Activated B cell treated with CpG ODN at 0.5 μM for 24 hours (primary cell): ENCODE measurements at regions of chrX and their contacts with region 1.

Region 1: DNA sequence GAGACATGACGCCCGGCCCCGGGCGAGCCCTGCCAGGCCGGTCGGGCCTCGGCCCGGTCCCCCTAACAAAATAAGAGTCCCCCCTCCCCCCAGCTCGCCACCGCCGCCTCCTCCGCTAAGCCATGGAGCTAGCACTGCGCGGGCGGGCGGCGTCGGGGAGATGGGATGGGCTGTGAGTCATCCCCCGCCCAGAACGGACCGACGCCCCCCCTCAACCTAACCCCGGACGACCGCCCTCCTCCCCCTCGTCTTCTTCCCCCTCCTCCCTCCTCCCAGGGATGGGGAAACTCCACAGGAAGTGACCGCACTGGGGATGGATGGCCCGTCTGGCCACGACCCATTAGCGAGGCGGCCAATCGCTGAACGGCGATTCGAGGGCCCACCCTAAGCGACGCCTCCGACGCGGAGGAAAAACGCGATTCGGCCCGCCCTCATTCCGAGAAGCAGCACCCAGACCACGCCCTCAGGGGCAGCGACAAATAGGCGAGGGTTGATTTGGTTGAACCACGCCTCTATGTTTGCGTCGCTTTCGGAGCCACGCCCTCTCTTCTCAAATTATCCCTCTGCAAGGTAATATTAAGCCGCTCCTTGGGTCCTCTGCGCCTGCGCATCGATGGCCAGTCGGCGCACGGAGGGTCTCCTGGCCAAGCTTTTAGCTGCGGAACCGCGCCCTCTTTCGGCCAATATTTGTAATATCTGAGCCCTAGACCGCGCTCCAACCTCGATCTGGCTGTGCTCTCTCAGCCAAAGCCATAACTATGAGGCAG is at the start of gene TFE3:
- DNase-seq: peak; percentile 82
- ATAC-seq: peak; percentile 86
- H3K4me3 Mint-ChIP-seq: peak within 1 kb of the TSS; percentile 89
- H3K27ac Mint-ChIP-seq: peak within 1 kb of the TSS; percentile 85
- H3K4me1 Mint-ChIP-seq: peaks cover 33% of the 10 kb centered on the region
- H3K27me3 Mint-ChIP-seq: no peaks in the 10 kb centered on the region
- CTCF ChIP-seq: no peak
- total RNA-seq, gene TFE3: 31.1 and 33.3 TPM in 2 replicates

Region 2: GRCh38 chrX:48676106-48676892 is 367.1 kb before region 1 on chrX:
- CTCF ChIA-PET with region 1: no interaction called
- POLR2A ChIA-PET with region 1: no interaction called
- intact Hi-C with region 1: loop called (anchors 10 kb)
- DNase-seq: peak; percentile 79
- ATAC-seq: peak; percentile 94
- H3K4me3 Mint-ChIP-seq: peak overlapping the region; percentile 89
- H3K27ac Mint-ChIP-seq: peak overlapping the region; percentile 88
- H3K4me1 Mint-ChIP-seq: peaks cover 22% of the 10 kb centered on the region
- H3K27me3 Mint-ChIP-seq: no peaks in the 10 kb centered on the region
- CTCF ChIP-seq: no peak

Region 3: DNA sequence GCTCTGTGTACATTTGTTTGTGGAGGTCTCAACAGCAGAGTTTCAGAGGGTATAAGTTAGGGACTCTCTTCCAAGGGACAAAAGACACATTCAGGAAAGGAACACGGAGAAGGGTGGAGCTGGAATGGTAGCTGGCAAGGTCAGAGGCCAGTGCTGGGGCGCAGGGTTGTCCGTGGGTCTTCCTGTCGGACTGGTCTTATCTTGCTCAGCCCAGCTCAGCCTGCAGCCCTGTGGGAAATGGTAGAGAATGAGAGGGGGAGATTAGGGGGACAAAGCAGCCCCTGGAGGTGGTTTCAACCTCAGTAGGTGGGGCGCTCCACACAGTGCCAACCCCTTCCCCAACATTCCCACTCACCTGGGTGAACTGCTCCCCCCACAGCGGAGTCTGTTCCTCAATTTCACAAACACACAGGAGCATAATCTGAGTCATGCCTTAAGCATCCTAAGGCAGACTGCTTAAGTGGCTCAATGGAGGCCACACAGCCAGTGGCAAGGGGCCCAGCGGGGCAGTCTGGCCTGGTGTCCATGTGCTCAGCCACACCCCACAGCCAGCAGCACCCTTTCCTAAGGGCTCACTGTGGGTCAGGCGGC is 248.4 kb before region 1 on chrX:
- CTCF ChIA-PET with region 1: no interaction called
- POLR2A ChIA-PET with region 1: no interaction called
- intact Hi-C with region 1: no loop called
- DNase-seq: no peak
- ATAC-seq: no peak
- H3K4me3 Mint-ChIP-seq: no peak overlapping the region
- H3K27ac Mint-ChIP-seq: no peak overlapping the region
- H3K4me1 Mint-ChIP-seq: no peaks in the 10 kb centered on the region
- H3K27me3 Mint-ChIP-seq: no peaks in the 10 kb centered on the region
- CTCF ChIP-seq: no peak

Region 4: DNA sequence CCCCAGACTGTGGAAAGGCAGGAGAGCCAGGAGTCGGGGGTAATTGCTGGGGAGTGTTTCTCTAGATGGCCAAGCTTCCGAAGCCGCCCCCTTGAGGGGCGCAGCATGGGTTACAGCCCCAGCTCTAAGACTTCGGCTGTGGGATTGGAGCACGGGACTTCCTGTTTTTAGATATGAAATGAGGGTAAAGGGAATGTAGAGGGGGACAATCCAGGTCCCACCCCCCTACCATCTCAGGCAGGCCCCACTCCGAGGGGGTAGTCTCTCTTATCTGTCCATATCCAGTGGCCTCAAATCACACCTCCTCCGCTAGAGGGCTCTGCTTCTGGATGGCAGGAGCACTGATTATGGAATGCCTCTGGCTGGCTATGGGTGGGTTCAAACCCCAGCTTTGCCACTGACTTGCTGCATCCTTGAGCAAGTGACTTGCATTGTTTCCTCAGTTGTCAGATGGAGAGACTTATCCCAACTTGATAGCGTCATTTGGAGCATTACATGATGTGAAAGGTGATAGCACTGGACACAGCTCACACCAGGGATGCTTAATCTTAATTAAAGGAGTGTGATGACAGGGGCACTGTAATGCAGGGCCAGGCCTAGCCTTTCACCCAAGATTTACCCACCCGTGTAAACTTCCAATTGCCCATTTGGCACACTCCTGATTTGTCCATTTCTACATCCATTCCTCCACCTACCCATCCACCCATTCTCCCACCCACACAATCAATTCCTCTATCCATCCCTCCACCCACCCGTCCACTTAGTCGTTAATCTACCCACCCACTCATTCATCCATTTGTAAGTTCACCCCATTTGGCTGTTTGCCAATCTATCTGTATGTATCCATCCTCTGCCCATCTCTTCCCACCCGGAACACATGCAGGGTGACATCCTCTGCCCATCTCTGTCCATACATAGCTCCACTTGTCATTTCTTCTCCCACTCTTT is 70.9 kb before region 1 on chrX:
- CTCF ChIA-PET with region 1: interaction called, 3 read pairs
- POLR2A ChIA-PET with region 1: interaction called, 3 read pairs
- intact Hi-C with region 1: loop called (anchors 1 kb)
- DNase-seq: no peak
- ATAC-seq: peak; percentile 67
- H3K4me3 Mint-ChIP-seq: peak overlapping the region; percentile 57
- H3K27ac Mint-ChIP-seq: no peak overlapping the region
- H3K4me1 Mint-ChIP-seq: peaks cover 13% of the 10 kb centered on the region
- H3K27me3 Mint-ChIP-seq: no peaks in the 10 kb centered on the region
- CTCF ChIP-seq: no peak

Region 5: GRCh38 chrX:49053223-49054072 is 10.0 kb after region 1 on chrX:
- CTCF ChIA-PET with region 1: no interaction called
- POLR2A ChIA-PET with region 1: interaction called, 5 read pairs
- intact Hi-C with region 1: loop called (anchors 1 kb)
- DNase-seq: peak; percentile 35
- ATAC-seq: peak; percentile 79
- H3K4me3 Mint-ChIP-seq: peak overlapping the region; percentile 81
- H3K27ac Mint-ChIP-seq: peak overlapping the region; percentile 85
- H3K4me1 Mint-ChIP-seq: peaks cover 25% of the 10 kb centered on the region
- H3K27me3 Mint-ChIP-seq: no peaks in the 10 kb centered on the region
- CTCF ChIP-seq: no peak

Region 6: DNA sequence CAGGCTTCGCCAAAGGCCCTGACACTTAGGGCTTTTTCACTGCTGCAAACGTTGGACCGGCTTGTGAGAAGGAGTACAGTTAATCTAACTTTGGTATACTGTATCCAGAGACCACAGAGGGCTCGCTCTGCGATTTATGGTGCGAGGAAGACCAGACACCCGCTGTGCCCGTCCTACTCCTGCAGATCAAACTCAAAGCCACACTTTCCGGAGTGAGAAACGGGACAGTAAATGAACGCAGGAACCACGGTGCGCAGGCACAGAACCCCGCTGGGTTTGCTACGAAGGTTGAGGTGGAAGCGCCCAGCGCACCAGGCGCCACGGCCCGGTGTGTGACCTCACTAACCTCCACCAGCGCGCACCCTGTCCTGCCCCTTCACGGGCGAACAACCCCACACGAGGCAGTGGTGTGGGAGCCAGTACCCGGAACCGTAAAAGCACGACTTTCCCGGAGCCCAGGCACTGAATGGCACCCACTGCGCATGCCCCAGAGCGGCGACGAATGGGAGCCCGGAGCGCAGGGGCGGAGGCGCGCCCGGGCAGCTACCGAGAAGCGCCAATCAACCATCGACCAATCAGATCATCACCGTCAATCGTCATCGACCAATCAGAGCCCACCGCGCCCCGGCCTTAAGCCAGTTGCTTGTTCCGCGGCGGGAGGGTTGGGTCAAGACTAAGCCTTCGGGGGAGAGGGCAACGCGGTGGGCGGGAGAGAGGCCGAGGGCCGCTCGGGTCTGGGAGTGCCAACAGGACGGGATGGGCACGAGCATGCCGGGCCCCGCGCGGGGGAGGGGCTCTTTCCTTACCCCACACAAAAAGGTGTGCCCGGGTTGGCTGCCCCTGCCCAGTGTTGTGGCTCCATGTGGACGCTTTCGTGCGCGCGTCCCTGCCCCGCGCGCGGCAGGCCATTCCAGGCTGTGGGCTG is 57.6 kb after region 1 on chrX:
- CTCF ChIA-PET with region 1: no interaction called
- POLR2A ChIA-PET with region 1: no interaction called
- intact Hi-C with region 1: loop called (anchors 1 kb)
- DNase-seq: peak; percentile 78
- ATAC-seq: peak; percentile 92
- H3K4me3 Mint-ChIP-seq: peak overlapping the region; percentile 90
- H3K27ac Mint-ChIP-seq: peak overlapping the region; percentile 95
- H3K4me1 Mint-ChIP-seq: peaks cover 9% of the 10 kb centered on the region
- H3K27me3 Mint-ChIP-seq: no peaks in the 10 kb centered on the region
- CTCF ChIP-seq: no peak

Region 7: GRCh38 chrX:49120099-49120498 is 76.7 kb after region 1 on chrX:
- CTCF ChIA-PET with region 1: no interaction called
- POLR2A ChIA-PET with region 1: no interaction called
- intact Hi-C with region 1: no loop called
- DNase-seq: no peak
- ATAC-seq: no peak
- H3K4me3 Mint-ChIP-seq: no peak overlapping the region
- H3K27ac Mint-ChIP-seq: no peak overlapping the region
- H3K4me1 Mint-ChIP-seq: peaks cover 27% of the 10 kb centered on the region
- H3K27me3 Mint-ChIP-seq: no peaks in the 10 kb centered on the region
- CTCF ChIP-seq: no peak